ENCODE measurements at regions of chr1 and their contacts with region 1.

Region 1: GRCh38 chr1:224644553-224645154 is 28.5 kb downstream of the CNIH3 start:
- DNase-seq: peak; percentile 65 to 67
- ATAC-seq: peak; percentile 58 to 89
- H3K4me3 ChIP-seq: no peak overlapping the region
- H3K27ac ChIP-seq: no peak overlapping the region
- H3K4me1 ChIP-seq: no peaks in the 10 kb centered on the region
- CTCF ChIP-seq: peak; percentile 76
- EP300 ChIP-seq: no peak
- POLR2A ChIP-seq: no peak
- RAD21 ChIP-seq: peak; percentile 57 to 65

Region 2: GRCh38 chr1:224623743-224624333 is 20.8 kb before region 1 on chr1:
- CTCF ChIA-PET with region 1: interaction called, 12 read pairs
- POLR2A ChIA-PET with region 1: no interaction called
- DNase-seq: no peak
- ATAC-seq: no peak
- H3K4me3 ChIP-seq: no peak overlapping the region
- H3K27ac ChIP-seq: no peak overlapping the region
- H3K4me1 ChIP-seq: no peaks in the 10 kb centered on the region; the same call in 2 of the 3 replicates
- CTCF ChIP-seq: no peak
- EP300 ChIP-seq: no peak
- POLR2A ChIP-seq: no peak
- RAD21 ChIP-seq: no peak

Region 3: DNA sequence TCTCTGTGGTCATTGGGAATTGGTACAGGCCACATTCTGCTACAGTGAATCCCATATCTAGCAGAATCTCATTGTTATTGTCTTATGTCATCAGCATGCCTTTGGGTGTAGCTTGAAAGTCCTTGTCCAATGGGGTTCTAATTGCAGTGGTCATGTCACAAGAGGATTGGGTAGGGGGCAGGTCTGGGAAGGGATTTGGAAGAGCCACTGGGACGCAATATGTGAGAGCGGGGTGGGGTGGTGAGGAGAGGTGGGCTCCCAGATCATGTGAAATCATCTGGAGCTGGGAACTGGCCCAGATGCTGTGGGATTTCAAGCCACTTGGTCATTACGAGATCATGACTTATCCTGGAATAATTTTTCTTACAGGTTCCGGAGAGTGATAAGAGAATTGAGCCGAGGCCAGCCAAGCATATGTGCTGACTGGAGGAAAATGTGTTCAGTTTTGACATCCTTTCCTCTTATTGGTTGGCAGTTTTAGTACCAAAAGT is 12.2 kb before region 1 on chr1:
- CTCF ChIA-PET with region 1: interaction called, 18 read pairs
- POLR2A ChIA-PET with region 1: no interaction called
- DNase-seq: no peak
- ATAC-seq: no peak
- H3K4me3 ChIP-seq: no peak overlapping the region
- H3K27ac ChIP-seq: no peak overlapping the region
- H3K4me1 ChIP-seq: no peaks in the 10 kb centered on the region
- CTCF ChIP-seq: no peak
- EP300 ChIP-seq: no peak
- POLR2A ChIP-seq: no peak
- RAD21 ChIP-seq: no peak

Region 4: DNA sequence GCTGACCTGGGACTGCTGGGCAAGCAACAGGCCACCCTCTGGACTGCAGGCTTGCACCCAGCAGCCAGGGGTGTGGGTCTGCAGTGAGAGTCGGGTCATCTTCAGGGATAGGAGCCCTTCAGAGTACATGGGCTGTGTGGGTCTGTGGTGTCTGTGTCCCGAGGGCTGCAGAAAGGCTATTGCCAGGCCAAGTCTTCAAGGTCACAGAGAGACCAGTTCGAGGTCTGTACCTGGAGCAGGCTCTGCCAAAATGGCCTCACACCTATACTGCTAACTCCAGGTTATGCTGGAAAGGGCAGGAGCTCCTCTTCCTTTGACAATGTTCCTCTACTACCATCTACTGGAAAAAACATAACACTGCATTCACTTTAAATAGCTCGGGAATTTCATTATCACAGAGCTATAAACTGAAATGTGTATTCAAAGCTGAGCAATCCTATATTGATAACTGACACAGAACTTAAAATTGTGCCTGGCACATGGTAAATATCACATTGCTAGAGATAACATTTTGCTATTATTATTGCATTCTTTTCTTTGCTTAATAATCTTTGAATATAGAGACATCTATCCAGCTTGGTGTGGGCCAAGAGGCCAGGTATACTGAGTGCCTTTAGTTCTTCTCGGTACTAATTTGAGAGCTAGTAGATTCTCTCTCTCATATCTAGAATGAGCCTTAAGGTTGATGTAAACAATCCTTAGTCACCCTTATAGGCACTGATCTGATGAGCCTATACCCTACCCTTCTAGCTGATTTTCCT is 277.9 kb after region 1 on chr1:
- CTCF ChIA-PET with region 1: interaction called, 20 read pairs
- POLR2A ChIA-PET with region 1: interaction called, 3 read pairs
- DNase-seq: peak; percentile 48 to 57
- ATAC-seq: peak; percentile 92 to 93
- H3K4me3 ChIP-seq: no peak overlapping the region
- H3K27ac ChIP-seq: no peak overlapping the region
- H3K4me1 ChIP-seq: no peaks in the 10 kb centered on the region
- CTCF ChIP-seq: peak; percentile 78
- EP300 ChIP-seq: no peak
- POLR2A ChIP-seq: no peak
- RAD21 ChIP-seq: peak; percentile 79 to 86

Region 5: DNA sequence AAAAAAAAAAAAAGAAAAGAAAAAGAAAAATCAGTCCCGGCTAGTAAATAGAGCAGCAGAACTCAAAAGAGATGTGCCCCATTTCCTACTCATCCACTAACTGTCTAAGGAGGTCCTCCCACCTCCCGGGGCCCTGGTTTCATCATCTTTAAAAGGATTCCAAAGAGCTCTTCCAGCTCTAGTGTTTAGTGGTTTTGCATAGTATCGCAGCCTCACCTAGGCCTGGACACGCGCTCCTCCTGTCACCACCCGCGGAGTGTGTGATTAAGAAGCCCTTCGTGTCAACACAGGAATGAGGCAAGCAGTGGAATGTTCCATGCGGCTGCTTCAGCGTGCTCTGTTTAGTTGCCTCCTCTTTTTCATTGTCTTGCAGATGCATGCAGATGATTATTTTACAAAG is 734.2 kb after region 1 on chr1:
- CTCF ChIA-PET with region 1: no interaction called
- POLR2A ChIA-PET with region 1: no interaction called
- DNase-seq: peak in 1 of 2 experiments; percentile 19
- ATAC-seq: peak in 1 of 2 experiments; percentile 46; a peak in 3 of 6 replicates
- H3K4me3 ChIP-seq: no peak overlapping the region
- H3K27ac ChIP-seq: no peak overlapping the region
- H3K4me1 ChIP-seq: no peaks in the 10 kb centered on the region
- CTCF ChIP-seq: no peak
- EP300 ChIP-seq: no peak
- POLR2A ChIP-seq: no peak
- RAD21 ChIP-seq: no peak